Activated CD4-positive, alpha-beta memory T cell treated with anti-CD3 and anti-CD28 coated beads, Interleukin-2, amount 10 ng/mL, durations not matched to agents 7 days and 5 days (primary cell): ENCODE measurements at regions of chr16 and their contacts with region 1.

Region 1: GRCh38 chr16:66872943-66873684 is 7.2 kb upstream of the PDP2 start:
- DNase-seq: peak; percentile 96
- H3K4me3 Mint-ChIP-seq: peak overlapping the region; percentile 72
- H3K27ac Mint-ChIP-seq: peak overlapping the region; percentile 82
- H3K4me1 Mint-ChIP-seq: peaks cover 50% of the 10 kb centered on the region
- H3K27me3 Mint-ChIP-seq: no peaks in the 10 kb centered on the region

Region 2: DNA sequence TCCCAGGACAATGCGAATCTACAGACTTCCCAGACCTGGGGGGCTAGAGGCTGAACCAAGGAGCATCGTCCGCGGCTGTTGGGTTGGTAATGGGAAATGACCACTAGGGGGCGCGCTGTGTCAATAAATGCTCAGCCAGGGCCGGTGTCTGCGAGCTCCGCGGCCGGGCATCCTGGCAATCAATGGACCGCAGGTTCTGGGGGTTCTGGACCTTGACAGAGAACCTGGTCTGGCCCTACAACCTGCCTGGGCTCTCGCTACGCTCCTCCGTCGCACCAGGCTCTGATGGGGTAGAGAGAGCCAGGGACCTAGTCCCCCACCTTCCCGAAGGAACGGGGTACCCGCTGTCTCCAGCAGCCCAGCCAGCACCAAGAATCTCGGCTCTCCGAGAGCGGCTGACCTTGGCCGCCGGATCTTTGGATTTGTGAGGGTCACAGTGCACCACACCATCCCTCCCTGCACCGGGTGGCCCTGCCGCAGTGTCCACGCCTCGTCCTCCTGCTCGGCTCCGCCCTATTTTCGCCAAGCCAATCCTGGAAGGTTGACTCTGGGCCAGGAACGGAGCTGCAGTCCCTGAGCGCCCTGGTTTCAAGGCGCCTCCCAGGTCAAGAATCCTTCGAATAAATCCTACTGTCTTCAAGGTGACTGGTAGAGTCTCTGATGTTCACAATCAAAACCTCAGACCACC is 466.4 kb before region 1 on chr16:
- CTCF ChIA-PET with region 1: interaction called, 16 read pairs
- POLR2A ChIA-PET with region 1: no interaction called
- DNase-seq: peak; percentile 90
- H3K4me3 Mint-ChIP-seq: peak overlapping the region; percentile 77
- H3K27ac Mint-ChIP-seq: peak overlapping the region; percentile 38
- H3K4me1 Mint-ChIP-seq: peaks cover 31% of the 10 kb centered on the region
- H3K27me3 Mint-ChIP-seq: peaks cover 17% of the 10 kb centered on the region

Region 3: DNA sequence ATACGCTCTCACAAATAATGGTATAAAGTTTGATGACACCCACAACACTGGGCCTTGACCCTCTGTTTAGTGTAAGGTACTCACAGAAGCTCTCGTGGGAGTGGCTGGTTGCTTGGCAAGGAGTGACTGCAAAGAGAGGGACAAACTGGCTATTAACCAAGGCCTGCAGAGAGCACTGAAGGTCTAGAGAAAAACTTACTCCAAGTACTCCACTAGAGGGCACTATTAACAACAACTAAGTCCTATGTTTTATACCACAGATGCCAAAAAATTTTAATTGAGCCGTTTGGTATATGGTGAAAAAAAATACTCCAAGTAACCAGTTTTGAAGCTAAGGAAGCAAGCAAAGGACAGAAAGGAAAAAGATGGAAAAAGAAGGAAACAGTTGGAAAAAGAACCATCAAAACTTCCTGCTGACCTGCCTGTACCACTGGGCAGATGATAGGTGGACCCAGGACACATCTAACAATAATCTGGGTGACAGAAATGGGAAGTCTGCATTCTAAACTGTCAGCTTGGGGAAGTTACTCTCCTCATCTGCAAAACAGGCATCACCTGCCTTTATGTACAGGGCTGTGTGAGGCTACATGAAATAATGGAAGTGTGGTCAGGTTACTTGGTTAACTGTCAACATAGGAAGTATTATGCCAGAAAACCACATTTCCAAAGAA is 144.9 kb before region 1 on chr16:
- CTCF ChIA-PET with region 1: interaction called, 28 read pairs
- POLR2A ChIA-PET with region 1: no interaction called
- DNase-seq: no peak
- H3K4me3 Mint-ChIP-seq: no peak overlapping the region
- H3K27ac Mint-ChIP-seq: no peak overlapping the region
- H3K4me1 Mint-ChIP-seq: peaks cover 2% of the 10 kb centered on the region
- H3K27me3 Mint-ChIP-seq: no peaks in the 10 kb centered on the region

Region 4: DNA sequence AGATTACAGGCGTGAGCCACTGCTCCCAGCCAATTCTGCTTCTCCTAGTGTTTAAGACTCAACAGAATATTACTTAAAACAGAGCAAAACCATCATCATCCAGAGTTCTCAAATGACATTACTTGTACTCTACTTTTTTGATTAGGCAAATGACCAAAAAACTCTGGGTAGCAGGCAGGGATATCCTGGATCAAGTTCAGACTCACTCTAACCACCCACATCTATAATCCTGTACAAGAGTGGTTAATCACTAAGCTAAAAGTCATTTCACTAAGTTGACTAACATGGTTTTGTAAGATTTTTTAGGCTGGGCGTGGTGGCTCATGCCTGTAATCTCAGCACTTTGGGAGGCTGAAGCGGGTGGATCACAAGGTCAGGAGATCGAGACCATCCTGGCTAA is 49.1 kb before region 1 on chr16:
- CTCF ChIA-PET with region 1: interaction called, 125 read pairs
- POLR2A ChIA-PET with region 1: interaction called, 37 read pairs
- DNase-seq: no peak
- H3K4me3 Mint-ChIP-seq: no peak overlapping the region
- H3K27ac Mint-ChIP-seq: no peak overlapping the region
- H3K4me1 Mint-ChIP-seq: peaks cover 23% of the 10 kb centered on the region
- H3K27me3 Mint-ChIP-seq: no peaks in the 10 kb centered on the region

Region 5: GRCh38 chr16:66862023-66862520 is 11.0 kb before region 1 on chr16:
- CTCF ChIA-PET with region 1: interaction called, 10 read pairs
- POLR2A ChIA-PET with region 1: interaction called, 3 read pairs
- DNase-seq: no peak
- H3K4me3 Mint-ChIP-seq: no peak overlapping the region
- H3K27ac Mint-ChIP-seq: no peak overlapping the region
- H3K4me1 Mint-ChIP-seq: no peaks in the 10 kb centered on the region
- H3K27me3 Mint-ChIP-seq: no peaks in the 10 kb centered on the region

Region 6: GRCh38 chr16:66928702-66929388 is 55.7 kb after region 1 on chr16:
- CTCF ChIA-PET with region 1: interaction called, 10 read pairs
- POLR2A ChIA-PET with region 1: interaction called, 11 read pairs
- DNase-seq: peak; percentile 64
- H3K4me3 Mint-ChIP-seq: no peak overlapping the region
- H3K27ac Mint-ChIP-seq: no peak overlapping the region
- H3K4me1 Mint-ChIP-seq: peaks cover 44% of the 10 kb centered on the region
- H3K27me3 Mint-ChIP-seq: peaks cover 18% of the 10 kb centered on the region